GM12878 (cell line): ENCODE measurements at regions of chr9 and their contacts with region 1.

Region 1: DNA sequence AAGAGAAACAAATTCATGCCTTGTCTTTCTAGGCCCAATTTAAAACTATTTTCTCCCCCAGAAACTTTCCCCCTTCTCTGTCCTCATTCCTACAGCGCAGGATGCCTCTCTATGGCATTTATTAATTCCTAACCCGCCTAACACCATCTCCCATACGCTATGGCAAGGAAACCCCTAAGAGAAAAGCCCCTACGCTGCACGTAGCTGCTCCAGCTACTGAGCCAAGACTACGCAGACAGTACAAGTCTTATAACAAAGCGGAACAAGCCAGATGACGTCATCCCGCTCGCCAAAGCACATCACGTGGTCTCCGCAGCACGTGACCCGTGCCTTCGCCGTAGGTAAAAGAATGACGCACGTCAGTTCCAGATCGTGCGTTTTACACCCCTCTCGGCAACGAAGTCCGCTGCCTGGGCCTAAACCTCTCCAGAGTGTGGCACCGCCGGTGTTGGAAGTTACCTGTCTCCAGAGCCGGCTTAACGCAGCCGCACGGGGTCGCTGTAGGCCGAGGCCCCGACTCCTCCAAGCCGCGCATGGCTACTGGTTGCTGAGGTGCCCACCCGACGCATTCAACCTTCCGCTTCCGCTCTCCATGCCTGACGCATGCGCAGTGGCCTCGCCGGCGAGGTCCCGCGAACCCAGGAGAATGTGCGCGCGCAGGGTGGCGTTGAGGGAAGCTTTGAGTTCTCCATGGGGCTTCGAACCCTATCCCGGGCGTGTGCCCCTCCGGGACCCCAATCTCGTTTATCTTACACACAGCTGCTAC is at the start of gene TRMO:
- DNase-seq: peak; percentile 98
- ATAC-seq: peak; percentile 90
- H3K4me3 ChIP-seq: peak within 1 kb of the TSS; percentile 62
- H3K27ac ChIP-seq: peak within 1 kb of the TSS; percentile 83
- H3K4me1 ChIP-seq: peaks cover 9% of the 10 kb centered on the region
- H3K27me3 ChIP-seq: no peaks in the 10 kb centered on the region
- CTCF ChIP-seq: peak; percentile 64 to 89 (median 69)
- EP300 ChIP-seq: peak; percentile 72 to 73; a peak in 2 of 4 replicates
- POLR2A ChIP-seq: peak; percentile 89
- RAD21 ChIP-seq: peak; percentile 23
- polyA plus RNA-seq, gene TRMO: 5.8 to 7.7 TPM

Region 2: GRCh38 chr9:97900738-97901565 is 21.2 kb before region 1 on chr9:
- CTCF ChIA-PET with region 1: interaction called, 58 read pairs
- POLR2A ChIA-PET with region 1: interaction called, 3 read pairs
- RAD21 ChIA-PET with region 1: no interaction called
- SMC1A ChIA-PET with region 1: interaction called, 5 read pairs
- in situ Hi-C with region 1: no loop called
- intact Hi-C with region 1: no loop called
- DNase-seq: no peak
- ATAC-seq: peak; percentile 61
- H3K4me3 ChIP-seq: no peak overlapping the region
- H3K27ac ChIP-seq: no peak overlapping the region
- H3K4me1 ChIP-seq: peaks cover 5% of the 10 kb centered on the region; the same call in 1 of the 2 replicates
- H3K27me3 ChIP-seq: no peaks in the 10 kb centered on the region
- CTCF ChIP-seq: peak; percentile 76 to 79 (median 78)
- EP300 ChIP-seq: no peak
- POLR2A ChIP-seq: no peak
- RAD21 ChIP-seq: peak; percentile 76

Region 3: GRCh38 chr9:97954550-97954989 is 32.4 kb after region 1 on chr9:
- CTCF ChIA-PET with region 1: interaction called, 37 read pairs
- POLR2A ChIA-PET with region 1: interaction called, 11 read pairs
- RAD21 ChIA-PET with region 1: interaction called, 4 read pairs
- SMC1A ChIA-PET with region 1: interaction called, 10 read pairs
- in situ Hi-C with region 1: no loop called
- intact Hi-C with region 1: loop called (anchors 1 kb)
- DNase-seq: no peak
- ATAC-seq: peak; percentile 97
- H3K4me3 ChIP-seq: no peak overlapping the region
- H3K27ac ChIP-seq: no peak overlapping the region
- H3K4me1 ChIP-seq: no peaks in the 10 kb centered on the region
- H3K27me3 ChIP-seq: no peaks in the 10 kb centered on the region
- CTCF ChIP-seq: peak; percentile 75 to 89 (median 76)
- EP300 ChIP-seq: no peak
- POLR2A ChIP-seq: no peak
- RAD21 ChIP-seq: peak; percentile 64

Region 4: DNA sequence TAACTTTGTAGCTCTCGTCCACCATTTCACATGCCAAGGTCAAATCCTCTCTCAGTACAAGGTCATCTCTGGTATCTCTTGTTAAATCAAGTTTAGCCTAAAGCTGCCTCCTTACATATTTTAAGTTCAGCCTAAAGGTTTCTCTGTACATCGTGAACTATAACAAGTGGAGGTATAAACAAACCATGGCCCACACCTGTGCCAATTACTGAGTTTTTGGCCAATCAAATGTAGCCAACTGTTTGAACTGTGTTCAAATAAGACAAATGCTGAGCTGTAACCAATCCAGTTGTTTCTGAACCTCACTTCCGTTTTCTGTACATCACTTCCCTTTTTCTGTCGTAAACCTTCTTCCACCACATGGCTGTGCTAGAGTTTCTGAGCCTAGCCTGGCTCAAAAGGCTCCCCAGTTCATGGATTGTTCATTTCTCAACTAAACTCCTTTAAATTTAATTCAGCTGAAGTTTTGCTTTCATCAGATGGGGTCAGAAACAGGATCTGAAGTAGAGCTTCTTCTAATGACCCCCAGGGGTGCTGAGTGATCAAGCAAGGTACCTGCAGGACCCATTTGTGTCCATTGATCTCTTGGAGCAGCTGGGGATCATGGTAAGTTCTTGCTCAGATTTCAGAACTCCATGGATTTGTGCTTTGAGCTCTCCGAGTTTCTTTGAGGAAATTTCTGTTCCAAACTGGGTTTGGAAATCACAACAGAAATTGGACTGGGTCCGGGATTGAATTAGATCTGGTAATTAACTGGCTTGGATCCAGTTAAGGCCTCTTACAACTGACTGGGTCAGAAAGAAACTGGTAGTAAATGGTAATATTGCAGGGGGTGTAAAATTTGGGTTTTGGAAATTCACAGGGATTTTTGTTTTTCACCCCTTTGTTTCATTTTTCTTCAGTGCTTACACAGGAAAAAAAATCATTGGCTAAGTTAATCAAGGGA is 123.4 kb after region 1 on chr9:
- CTCF ChIA-PET with region 1: interaction called, 15 read pairs
- POLR2A ChIA-PET with region 1: interaction called, 3 read pairs
- RAD21 ChIA-PET with region 1: no interaction called
- SMC1A ChIA-PET with region 1: interaction called, 5 read pairs
- in situ Hi-C with region 1: no loop called
- intact Hi-C with region 1: loop called (anchors 2 kb)
- DNase-seq: peak; percentile 84
- ATAC-seq: peak; percentile 93
- H3K4me3 ChIP-seq: peak overlapping the region; percentile 58
- H3K27ac ChIP-seq: peak overlapping the region; percentile 88
- H3K4me1 ChIP-seq: peaks cover 11% of the 10 kb centered on the region; the same call in 1 of the 2 replicates
- H3K27me3 ChIP-seq: no peaks in the 10 kb centered on the region
- CTCF ChIP-seq: peak in 2 of 3 experiments; percentile 9 to 30; a peak in 1 of 6 replicates
- EP300 ChIP-seq: no peak; a peak in 1 of 4 replicates
- POLR2A ChIP-seq: peak; percentile 54; the same call in 1 of the 2 replicates
- RAD21 ChIP-seq: no peak

Region 5: DNA sequence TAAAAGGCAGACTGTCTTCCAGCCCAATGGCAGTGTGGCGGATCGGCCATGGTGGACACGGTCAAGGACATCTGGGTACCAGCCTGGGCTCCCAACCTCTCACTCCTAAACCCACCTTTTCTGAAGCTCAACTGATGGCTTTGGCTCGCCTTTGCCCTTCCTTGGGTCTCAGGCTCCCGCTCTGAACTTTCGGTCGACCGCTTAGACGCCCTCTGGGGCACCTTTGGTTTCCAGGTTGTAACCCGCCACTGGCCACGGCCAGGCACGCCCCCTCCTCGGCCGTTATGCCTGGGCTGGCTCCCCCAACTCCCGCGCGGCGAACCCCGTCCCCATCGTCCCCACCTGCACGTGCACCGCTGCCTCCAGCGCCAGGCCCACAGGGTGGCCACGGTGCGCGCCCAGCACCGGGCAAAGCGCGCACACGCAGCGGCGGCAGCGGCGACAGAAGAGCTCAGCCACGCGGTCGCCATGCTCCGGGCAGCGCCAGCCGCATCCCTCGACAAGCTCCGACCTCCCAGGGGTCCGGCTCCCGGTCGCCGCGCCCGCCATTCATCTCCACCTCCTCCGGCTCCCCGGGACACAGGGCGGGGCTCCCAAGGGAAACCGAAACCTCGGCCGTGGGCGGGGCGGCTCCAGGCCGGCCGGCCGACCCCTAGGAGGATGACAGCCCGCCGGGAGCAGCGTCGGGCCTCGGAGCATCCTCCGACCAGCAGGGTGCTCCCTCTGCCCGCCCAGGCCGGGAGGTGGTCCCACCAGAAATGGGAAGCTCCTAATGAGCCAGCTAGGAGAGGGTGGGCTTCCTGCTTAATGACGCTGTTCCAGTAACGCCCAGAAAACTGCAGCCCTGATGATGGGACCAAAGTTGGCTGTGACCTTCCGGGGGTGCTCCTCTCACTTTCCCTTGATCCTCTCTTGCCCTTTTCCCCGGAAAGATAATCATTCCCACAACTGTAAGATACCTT is 196.8 kb after region 1 on chr9 and contains the start of gene TRIM14:
- CTCF ChIA-PET with region 1: interaction called, 3 read pairs
- POLR2A ChIA-PET with region 1: no interaction called
- RAD21 ChIA-PET with region 1: interaction called, 11 read pairs
- SMC1A ChIA-PET with region 1: interaction called, 3 read pairs
- in situ Hi-C with region 1: no loop called
- intact Hi-C with region 1: no loop called
- DNase-seq: no peak
- ATAC-seq: peak; percentile 78
- H3K4me3 ChIP-seq: peak within 1 kb of the TSS; percentile 77
- H3K27ac ChIP-seq: peak within 1 kb of the TSS; percentile 90
- H3K4me1 ChIP-seq: peaks cover 25% of the 10 kb centered on the region
- H3K27me3 ChIP-seq: no peaks in the 10 kb centered on the region
- CTCF ChIP-seq: peak in 2 of 3 experiments; percentile 28 to 44; a peak in 3 of 6 replicates
- EP300 ChIP-seq: no peak
- POLR2A ChIP-seq: peak; percentile 94
- RAD21 ChIP-seq: peak; percentile 47
- polyA plus RNA-seq, gene TRIM14: 8.6 to 10.2 TPM

Region 6: DNA sequence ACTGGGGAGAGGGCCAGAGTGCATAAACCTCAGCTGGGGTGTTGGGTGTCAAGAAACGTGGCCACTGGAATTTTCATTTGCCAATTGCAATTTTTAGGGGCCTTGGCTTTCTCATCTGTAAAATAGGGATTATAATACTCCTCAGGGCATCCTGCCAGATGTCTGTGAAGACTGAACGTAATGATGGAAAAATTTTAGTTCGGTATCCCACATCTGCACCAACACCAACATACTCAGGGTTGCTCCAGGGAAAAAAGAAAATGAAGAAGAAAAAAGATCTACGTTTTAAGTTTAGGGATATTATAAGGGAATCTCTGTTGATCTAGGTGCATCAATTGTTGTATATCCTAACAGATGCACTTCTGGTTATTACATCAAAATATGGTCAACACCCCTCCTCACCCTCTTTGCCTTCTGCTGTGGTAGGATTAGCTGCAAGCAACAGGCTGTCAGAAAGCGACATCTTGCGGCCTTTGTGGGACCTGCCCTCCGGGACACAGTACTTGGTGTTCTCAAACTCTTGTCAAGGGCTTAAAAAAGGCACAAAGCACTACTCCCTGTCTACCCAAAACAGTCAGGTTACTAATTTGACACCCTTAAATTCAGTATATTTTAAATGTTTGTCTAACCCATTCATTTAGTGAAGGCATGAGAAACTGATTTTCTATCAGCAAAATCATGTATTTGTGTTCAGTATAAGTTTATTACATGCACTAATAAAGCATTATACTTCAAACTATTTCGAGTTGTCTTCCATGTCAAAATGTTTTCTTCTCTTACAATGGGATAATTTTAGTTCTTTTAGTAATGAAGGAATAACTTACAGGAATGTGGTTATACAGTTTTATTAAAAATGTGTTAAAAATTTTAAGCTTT is 341.6 kb after region 1 on chr9:
- CTCF ChIA-PET with region 1: interaction called, 30 read pairs
- POLR2A ChIA-PET with region 1: interaction called, 3 read pairs
- RAD21 ChIA-PET with region 1: interaction called, 15 read pairs
- SMC1A ChIA-PET with region 1: interaction called, 3 read pairs
- in situ Hi-C with region 1: no loop called
- intact Hi-C with region 1: loop called (anchors 1 kb)
- DNase-seq: peak; percentile 40
- ATAC-seq: peak; percentile 100
- H3K4me3 ChIP-seq: no peak overlapping the region
- H3K27ac ChIP-seq: no peak overlapping the region
- H3K4me1 ChIP-seq: no peaks in the 10 kb centered on the region
- H3K27me3 ChIP-seq: no peaks in the 10 kb centered on the region
- CTCF ChIP-seq: peak; percentile 91 to 95 (median 93)
- EP300 ChIP-seq: no peak
- POLR2A ChIP-seq: no peak
- RAD21 ChIP-seq: peak; percentile 99